Activated CD8-positive, alpha-beta T cell treated with anti-CD3 and anti-CD28 coated beads for 36 hours (primary cell): ENCODE measurements at regions of chr19 and their contacts with region 1.

Region 1: GRCh38 chr19:44002566-44003460 is at the start of gene ZNF230:
- DNase-seq: peak; percentile 92
- ATAC-seq: peak; percentile 96
- H3K4me3 Mint-ChIP-seq: peak within 1 kb of the TSS; percentile 96
- H3K27ac Mint-ChIP-seq: peak within 1 kb of the TSS; percentile 98
- H3K4me1 Mint-ChIP-seq: peaks cover 14% of the 10 kb centered on the region
- H3K27me3 Mint-ChIP-seq: no peaks in the 10 kb centered on the region
- CTCF ChIP-seq: no peak
- total RNA-seq, gene ZNF230: 3.4 to 5.6 TPM

Region 2: GRCh38 chr19:43934985-43935708 is 67.7 kb before region 1 on chr19 and contains the start of gene ZNF45:
- CTCF ChIA-PET with region 1: interaction called, 3 read pairs
- POLR2A ChIA-PET with region 1: no interaction called
- intact Hi-C with region 1: loop called (anchors 10 kb)
- DNase-seq: peak; percentile 91
- ATAC-seq: peak; percentile 96
- H3K4me3 Mint-ChIP-seq: peak within 1 kb of the TSS; percentile 94
- H3K27ac Mint-ChIP-seq: peak within 1 kb of the TSS; percentile 93
- H3K4me1 Mint-ChIP-seq: peaks cover 19% of the 10 kb centered on the region
- H3K27me3 Mint-ChIP-seq: no peaks in the 10 kb centered on the region
- CTCF ChIP-seq: no peak
- total RNA-seq, gene ZNF45: 7.9 to 8.8 TPM

Region 3: DNA sequence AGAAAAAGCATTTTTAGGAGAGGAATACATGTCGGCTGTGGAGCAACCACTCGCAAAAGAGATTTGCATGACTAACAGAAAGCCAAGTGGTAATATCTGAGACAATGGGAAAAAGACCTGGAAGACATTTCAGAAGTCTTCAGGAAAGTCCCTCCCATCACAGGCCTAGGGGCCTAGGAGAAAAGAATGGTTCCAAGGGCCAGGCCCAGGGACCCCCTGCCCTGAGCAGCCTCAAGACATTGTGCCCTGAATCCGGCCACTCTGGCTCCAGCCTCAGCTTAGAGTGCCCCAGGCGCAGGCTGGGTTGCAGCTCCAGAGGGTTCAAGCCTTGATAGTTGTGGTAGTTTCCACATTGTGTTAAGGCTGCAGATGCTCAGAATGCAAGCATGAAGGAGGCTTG is 42.4 kb before region 1 on chr19:
- CTCF ChIA-PET with region 1: no interaction called
- POLR2A ChIA-PET with region 1: no interaction called
- intact Hi-C with region 1: no loop called
- DNase-seq: no peak
- ATAC-seq: no peak
- H3K4me3 Mint-ChIP-seq: no peak overlapping the region
- H3K27ac Mint-ChIP-seq: no peak overlapping the region
- H3K4me1 Mint-ChIP-seq: no peaks in the 10 kb centered on the region
- H3K27me3 Mint-ChIP-seq: no peaks in the 10 kb centered on the region
- CTCF ChIP-seq: no peak